ENCODE measurements at regions of chr4 and their contacts with region 1.

Region 1: DNA sequence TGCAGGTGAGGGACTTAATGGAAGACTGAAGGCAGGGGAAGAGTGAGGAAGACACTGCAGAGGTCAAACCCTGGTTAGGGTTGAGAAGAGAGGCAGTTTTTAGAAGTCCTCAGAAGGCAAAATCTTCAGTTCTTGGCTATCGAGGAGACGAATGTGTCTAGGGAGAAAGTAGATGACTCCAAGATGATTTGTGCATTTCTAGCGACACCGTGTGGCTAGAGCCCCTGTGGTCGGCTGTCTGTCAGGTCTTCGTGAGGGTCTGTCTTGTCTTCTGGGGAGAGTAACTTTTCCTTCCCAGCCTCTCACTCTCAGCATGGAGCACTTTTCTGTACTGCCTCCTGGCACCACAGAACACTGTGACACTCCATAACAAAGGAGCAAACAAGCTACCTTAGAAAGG is 458.1 kb downstream of the STIM2 start:
- DNase-seq: peak; percentile 20
- H3K4me3 Mint-ChIP-seq: no peak overlapping the region
- H3K27ac Mint-ChIP-seq: no peak overlapping the region
- H3K4me1 Mint-ChIP-seq: no peaks in the 10 kb centered on the region
- H3K27me3 Mint-ChIP-seq: no peaks in the 10 kb centered on the region

Region 2: DNA sequence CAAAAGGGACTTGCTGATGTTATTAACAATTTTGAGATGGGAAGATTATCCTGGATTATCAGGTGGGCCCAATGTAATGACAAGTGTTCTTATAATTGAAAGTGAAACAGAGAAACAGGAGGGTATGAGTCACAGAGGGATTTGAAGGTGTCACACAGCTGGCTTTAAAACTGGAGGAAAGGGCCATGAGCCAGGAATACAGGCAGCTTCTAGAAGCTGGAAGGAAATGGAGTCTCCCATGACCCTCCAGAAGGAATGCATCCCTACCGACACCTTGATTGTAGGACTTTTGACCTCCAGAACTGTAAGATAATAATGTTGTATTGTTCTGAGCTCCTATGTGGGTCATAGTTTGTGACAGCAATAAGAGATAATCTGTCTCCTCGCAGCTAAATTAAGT is 556.1 kb before region 1 on chr4:
- CTCF ChIA-PET with region 1: no interaction called
- POLR2A ChIA-PET with region 1: no interaction called
- intact Hi-C with region 1: no loop called
- DNase-seq: no peak
- H3K4me3 Mint-ChIP-seq: no peak overlapping the region
- H3K27ac Mint-ChIP-seq: no peak overlapping the region
- H3K4me1 Mint-ChIP-seq: no peaks in the 10 kb centered on the region
- H3K27me3 Mint-ChIP-seq: no peaks in the 10 kb centered on the region

Region 3: DNA sequence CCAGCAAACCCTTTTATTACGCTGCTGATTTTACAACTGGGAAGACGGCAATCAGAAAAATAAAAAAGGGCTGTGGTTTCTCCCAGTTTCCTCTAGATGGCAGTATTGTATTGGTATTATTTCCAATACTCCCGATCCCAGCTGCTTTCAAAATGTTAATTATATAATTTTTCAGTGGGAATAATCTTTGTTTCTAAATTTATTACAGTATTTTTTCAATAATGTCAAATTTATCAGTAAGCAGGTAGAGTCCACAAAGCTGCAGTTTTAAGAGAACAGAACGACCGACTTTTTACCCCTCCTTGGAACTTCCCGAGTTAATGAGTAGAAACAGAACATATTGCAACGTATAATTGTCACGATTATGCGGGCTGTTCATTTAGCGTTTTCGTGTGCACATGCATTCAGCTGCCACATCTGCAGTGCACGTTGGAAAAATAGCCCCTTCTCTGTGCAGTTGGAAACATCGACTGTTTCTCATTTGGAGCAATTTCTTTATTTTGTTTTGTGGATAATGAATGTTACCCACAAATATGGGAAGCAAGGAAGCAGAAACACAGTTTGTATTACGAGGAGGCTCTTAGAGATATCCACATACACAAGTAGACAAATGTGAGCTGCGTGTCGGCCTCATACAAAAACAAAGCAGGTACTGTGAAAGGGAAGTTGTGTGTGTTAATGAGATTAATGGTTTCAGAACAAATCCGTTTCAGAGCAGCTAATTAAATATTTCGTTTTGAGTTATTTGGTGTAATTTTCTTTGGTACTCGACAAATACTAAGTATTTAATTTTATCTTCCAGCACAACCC is 270.1 kb before region 1 on chr4:
- CTCF ChIA-PET with region 1: interaction called, 3 read pairs
- POLR2A ChIA-PET with region 1: no interaction called
- intact Hi-C with region 1: loop called (anchors 1 kb)
- DNase-seq: no peak
- H3K4me3 Mint-ChIP-seq: no peak overlapping the region
- H3K27ac Mint-ChIP-seq: no peak overlapping the region
- H3K4me1 Mint-ChIP-seq: peaks cover 6% of the 10 kb centered on the region
- H3K27me3 Mint-ChIP-seq: peaks cover 30% of the 10 kb centered on the region

Region 4: DNA sequence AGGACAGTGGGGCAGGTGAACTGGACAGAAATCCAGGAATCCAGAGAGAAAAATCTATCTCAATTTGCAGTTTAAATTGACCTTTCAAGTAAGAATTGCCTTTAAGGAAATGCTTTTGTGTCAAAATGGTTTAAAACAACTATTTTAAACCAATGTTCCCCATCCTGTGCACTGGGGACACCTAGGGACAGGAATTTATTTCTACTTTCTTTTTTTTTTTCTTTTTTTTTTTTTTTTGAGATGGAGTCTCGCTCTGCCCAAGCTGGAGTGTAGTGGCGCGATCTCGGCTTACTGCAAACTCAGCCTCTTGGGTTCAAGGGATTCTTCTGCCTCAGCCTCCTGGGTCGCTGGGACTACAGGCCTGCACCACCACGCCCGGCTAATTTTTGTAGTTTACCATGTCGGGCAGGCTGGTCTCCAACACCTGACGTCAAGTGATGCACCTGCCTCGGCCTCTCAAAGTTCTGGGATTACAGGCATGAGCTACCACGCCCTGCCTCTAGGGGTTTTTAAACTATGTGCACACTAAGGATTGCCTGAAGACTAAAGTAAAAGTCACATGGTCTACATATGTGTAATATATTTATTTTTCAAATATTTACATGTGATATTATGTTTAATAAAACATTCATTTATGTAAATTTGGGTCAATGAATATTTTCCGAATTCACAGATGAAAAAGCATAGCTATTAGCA is 755.3 kb after region 1 on chr4:
- CTCF ChIA-PET with region 1: no interaction called
- POLR2A ChIA-PET with region 1: no interaction called
- intact Hi-C with region 1: no loop called
- DNase-seq: no peak
- H3K4me3 Mint-ChIP-seq: no peak overlapping the region
- H3K27ac Mint-ChIP-seq: no peak overlapping the region
- H3K4me1 Mint-ChIP-seq: no peaks in the 10 kb centered on the region
- H3K27me3 Mint-ChIP-seq: no peaks in the 10 kb centered on the region

Measured in activated CD4-positive, alpha-beta memory T cell treated with anti-CD3 and anti-CD28 coated beads for 36 hours (primary cell).